WTC11 (cell line): ENCODE measurements at regions of chr4 and their contacts with region 1.

Region 1: DNA sequence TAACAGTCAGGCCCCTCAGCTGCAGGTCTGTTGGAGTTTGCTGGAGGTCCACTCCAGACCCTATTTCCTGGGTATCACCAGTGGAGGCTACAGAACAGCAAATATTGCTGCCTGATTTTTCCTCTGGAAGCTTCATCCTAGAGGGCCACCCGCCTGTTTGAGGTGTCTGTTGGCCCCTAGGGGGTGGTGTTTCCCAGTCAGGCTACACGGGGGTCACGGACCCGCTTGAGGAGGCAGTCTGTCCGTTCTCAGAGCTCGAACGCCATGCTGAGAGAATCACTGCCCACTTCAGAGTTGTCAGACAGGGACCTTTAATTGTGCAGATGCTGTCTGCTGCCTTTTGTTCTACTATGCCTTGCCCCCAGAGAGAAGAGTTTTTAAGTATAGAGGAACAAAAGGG is 160.8 kb downstream of the DKK2 start:
- DNase-seq: peak; percentile 68
- ATAC-seq: no peak
- H3K4me3 Mint-ChIP-seq: no peak overlapping the region
- H3K27ac Mint-ChIP-seq: no peak overlapping the region
- H3K4me1 Mint-ChIP-seq: no peaks in the 10 kb centered on the region
- H3K27me3 Mint-ChIP-seq: no peaks in the 10 kb centered on the region
- CTCF ChIP-seq: peak; percentile 43; the same call in 1 of the 2 replicates

Region 2: DNA sequence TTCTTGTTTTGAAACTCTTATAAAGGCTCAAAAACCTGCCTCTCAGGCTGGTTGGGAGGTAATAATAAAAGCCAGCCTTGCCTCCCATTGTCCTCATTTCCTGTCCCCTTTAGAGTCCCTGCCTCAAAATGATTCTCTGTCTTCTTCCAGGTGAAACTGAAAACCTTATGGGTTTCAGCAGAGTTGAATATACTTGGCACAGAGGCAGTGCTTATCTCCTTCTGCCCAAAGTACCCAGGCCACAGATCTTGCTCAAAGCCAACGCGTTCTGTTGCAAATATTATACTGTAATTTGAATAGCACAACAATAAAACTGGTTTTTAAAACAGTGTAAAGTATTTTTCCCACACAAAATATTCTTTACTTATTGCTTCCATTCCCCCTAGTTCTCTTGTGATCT is 323.6 kb before region 1 on chr4:
- CTCF ChIA-PET with region 1: no interaction called
- POLR2A ChIA-PET with region 1: no interaction called
- DNase-seq: no peak
- ATAC-seq: no peak
- H3K4me3 Mint-ChIP-seq: no peak overlapping the region
- H3K27ac Mint-ChIP-seq: no peak overlapping the region
- H3K4me1 Mint-ChIP-seq: peaks cover 14% of the 10 kb centered on the region
- H3K27me3 Mint-ChIP-seq: no peaks in the 10 kb centered on the region
- CTCF ChIP-seq: no peak

Region 3: DNA sequence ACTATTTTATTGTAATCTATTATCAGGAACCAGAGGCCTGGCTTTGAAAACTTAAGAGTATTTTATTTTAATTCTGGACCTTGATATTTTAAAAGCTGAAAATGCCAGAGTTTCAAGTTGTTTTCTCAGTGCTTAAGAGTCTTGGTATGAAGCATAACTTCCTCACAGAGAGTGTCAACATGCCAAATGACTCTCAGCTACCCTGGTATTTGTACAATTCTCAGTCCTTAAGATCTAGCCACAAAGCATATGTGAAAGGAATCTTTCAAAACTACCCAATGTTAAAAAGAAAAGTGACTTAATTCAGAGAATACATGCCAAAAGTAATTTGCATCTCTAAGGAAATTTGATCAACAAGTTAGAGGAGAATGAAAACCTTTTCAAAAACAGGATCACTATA is 11.1 kb before region 1 on chr4:
- CTCF ChIA-PET with region 1: no interaction called
- POLR2A ChIA-PET with region 1: no interaction called
- DNase-seq: no peak
- ATAC-seq: no peak
- H3K4me3 Mint-ChIP-seq: no peak overlapping the region
- H3K27ac Mint-ChIP-seq: no peak overlapping the region
- H3K4me1 Mint-ChIP-seq: no peaks in the 10 kb centered on the region
- H3K27me3 Mint-ChIP-seq: no peaks in the 10 kb centered on the region
- CTCF ChIP-seq: no peak

Region 4: GRCh38 chr4:106898621-106899230 is 23.4 kb after region 1 on chr4:
- CTCF ChIA-PET with region 1: interaction called, 12 read pairs
- POLR2A ChIA-PET with region 1: no interaction called
- DNase-seq: peak; percentile 32
- ATAC-seq: peak; percentile 89
- H3K4me3 Mint-ChIP-seq: no peak overlapping the region
- H3K27ac Mint-ChIP-seq: no peak overlapping the region
- H3K4me1 Mint-ChIP-seq: no peaks in the 10 kb centered on the region
- H3K27me3 Mint-ChIP-seq: no peaks in the 10 kb centered on the region
- CTCF ChIP-seq: peak; percentile 60